A673 (cell line): ENCODE measurements at regions of chr10 and their contacts with region 1.

Region 1: GRCh38 chr10:59434463-59435321 is 72.3 kb upstream of the FAM13C start:
- DNase-seq: peak; percentile 49
- H3K4me3 ChIP-seq: no peak overlapping the region
- H3K27ac ChIP-seq: peak overlapping the region; percentile 73
- H3K4me1 ChIP-seq: peaks cover 56% of the 10 kb centered on the region
- H3K27me3 ChIP-seq: no peaks in the 10 kb centered on the region
- CTCF ChIP-seq: no peak

Region 2: DNA sequence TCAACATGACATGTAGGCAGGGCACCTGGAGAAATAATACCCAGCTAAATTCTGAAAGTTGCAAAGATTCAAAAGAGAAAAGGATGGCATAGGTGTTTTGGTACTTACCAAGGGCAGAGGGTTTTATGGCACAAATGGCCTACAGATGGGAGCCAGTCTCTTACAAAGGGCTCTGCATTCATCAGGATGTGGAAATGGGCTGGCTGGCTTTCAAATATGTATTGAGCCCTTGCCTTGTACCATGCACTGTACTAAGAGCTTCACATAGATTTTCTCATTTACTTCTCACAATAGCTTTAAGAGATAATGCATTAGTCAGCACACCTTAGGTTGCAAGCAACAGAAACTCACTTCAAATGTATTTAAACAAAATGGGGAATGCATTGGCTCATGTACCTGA is 594.9 kb before region 1 on chr10:
- CTCF ChIA-PET with region 1: no interaction called
- POLR2A ChIA-PET with region 1: no interaction called
- intact Hi-C with region 1: no loop called
- DNase-seq: no peak
- H3K4me3 ChIP-seq: no peak overlapping the region
- H3K27ac ChIP-seq: no peak overlapping the region
- H3K4me1 ChIP-seq: no peaks in the 10 kb centered on the region
- H3K27me3 ChIP-seq: no peaks in the 10 kb centered on the region
- CTCF ChIP-seq: no peak

Region 3: GRCh38 chr10:59362144-59362958 is 72.3 kb before region 1 on chr10 and contains the start of gene FAM13C:
- CTCF ChIA-PET with region 1: no interaction called
- POLR2A ChIA-PET with region 1: interaction called, 10 read pairs
- intact Hi-C with region 1: loop called (anchors 2 kb)
- DNase-seq: peak; percentile 88
- H3K4me3 ChIP-seq: peak within 1 kb of the TSS; percentile 53
- H3K27ac ChIP-seq: peak within 1 kb of the TSS; percentile 64
- H3K4me1 ChIP-seq: peaks cover 25% of the 10 kb centered on the region
- H3K27me3 ChIP-seq: no peaks in the 10 kb centered on the region
- CTCF ChIP-seq: no peak
- total RNA-seq, gene FAM13C: 18.5 and 21.2 TPM in 2 replicates

Region 4: GRCh38 chr10:59465088-59465487 is 30.4 kb after region 1 on chr10:
- CTCF ChIA-PET with region 1: interaction called, 4 read pairs
- POLR2A ChIA-PET with region 1: no interaction called
- intact Hi-C with region 1: loop called (anchors 1 kb)
- DNase-seq: peak; percentile 62
- H3K4me3 ChIP-seq: no peak overlapping the region
- H3K27ac ChIP-seq: no peak overlapping the region
- H3K4me1 ChIP-seq: peaks cover 25% of the 10 kb centered on the region
- H3K27me3 ChIP-seq: no peaks in the 10 kb centered on the region
- CTCF ChIP-seq: peak; percentile 51